Posterior cingulate gyrus (tissue), 11 donors: ENCODE measurements at regions of chr21 and their contacts with region 1.

Region 1: DNA sequence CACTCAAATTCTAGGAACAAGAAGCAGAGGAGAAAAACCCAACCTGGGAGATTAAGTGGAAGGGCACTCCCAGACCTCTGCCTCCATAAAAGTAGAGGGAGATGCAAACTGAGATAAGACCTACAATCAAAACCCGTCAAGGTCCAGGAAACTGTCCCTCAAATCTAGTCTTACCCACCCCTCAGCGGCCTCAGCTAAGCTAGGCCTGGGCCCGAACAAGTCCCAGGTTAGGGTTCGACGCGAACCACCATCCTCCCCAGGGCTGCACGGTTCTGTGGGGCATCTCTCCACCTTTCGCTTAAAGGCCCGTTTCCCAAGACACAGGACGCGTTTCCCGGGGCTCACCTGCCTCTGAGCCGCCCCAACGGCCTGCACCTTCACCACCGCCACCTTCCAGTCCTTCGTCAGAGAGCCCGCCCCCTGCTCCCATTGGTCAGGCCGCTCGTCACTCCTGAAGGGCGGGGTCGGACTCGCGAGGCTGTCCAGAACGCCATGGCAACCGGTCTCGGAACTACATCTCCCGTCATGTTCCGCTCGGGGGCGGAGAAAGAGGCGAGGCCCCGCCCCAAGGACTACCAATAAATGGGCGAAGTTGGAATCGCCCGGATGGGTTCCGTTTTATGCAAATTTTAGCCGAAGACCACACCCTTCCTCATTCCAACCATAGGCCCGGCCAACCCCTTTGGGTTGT is at the start of gene CRYZL1:
- DNase-seq: peak; percentile 100

Region 2: DNA sequence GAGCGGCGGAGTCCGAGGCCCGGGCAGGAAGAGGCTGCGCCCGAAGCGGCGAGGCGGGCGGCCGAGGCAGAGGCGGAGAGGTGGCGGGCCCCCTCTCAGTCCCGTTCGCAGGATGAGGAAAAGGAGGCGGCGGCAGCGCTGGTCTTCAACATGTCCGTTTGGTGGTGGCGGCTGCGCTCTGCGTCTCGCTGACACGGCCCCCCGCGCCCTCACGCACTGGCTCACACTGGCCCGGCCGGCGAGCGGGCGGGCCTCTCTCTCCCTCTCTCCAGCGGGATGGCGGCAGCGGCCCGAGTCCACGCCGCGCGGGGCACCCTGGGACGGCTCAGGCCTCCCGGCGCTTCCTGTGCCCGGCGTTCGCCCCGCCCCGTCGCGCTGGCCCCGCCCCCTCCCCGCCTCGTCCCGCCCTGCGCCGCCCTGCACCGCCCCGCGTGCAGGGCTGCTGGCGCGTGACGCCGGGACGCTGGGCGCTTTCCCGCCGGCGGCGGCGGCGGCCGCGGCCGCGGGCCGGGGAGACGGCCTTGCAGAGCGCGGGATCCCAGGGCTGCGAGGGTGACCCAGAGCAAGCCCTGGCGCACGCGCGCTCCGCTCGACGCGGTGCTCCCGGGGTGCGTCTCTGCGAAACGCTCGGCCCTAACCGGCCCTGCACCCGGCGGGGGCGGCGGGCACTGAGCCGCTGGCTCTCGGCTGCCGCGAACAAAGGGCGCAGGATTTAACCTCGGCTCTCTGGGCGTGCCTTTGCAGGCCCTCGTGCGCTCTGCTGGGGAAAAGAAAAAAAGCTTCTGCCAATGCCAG is 1909.5 kb before region 1 on chr21 and contains the start of gene SCAF4:
- intact Hi-C with region 1: loop called (anchors 10 kb)
- DNase-seq: peak; percentile 85 to 98 (median 90)

Region 3: GRCh38 chr21:33169359-33169758 is 472.1 kb before region 1 on chr21:
- intact Hi-C with region 1: no loop called
- DNase-seq: no peak

Region 4: GRCh38 chr21:33588485-33589335 is 52.8 kb before region 1 on chr21 and contains the start of gene DONSON:
- intact Hi-C with region 1: loop called (anchors 2 kb)
- DNase-seq: peak; percentile 78 to 98 (median 85)

Region 5: DNA sequence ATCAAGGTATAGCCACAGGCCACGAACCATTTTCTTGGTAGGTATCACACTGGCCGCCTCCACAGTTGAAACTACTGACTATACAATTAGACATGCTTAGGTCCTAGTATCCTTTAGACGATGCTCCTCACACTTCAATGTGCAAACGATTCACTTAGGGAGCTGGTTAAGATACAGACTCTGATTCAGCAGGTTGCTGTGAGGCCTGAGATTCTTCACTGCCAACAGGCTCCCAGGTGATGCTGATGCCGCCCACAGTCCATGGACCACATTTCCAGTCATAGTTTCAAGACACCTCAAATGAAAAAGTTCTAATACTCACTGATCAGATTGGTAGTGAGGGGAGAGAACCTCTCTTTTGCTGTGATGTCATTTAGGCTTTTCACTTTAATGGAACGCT is 267.3 kb after region 1 on chr21:
- intact Hi-C with region 1: loop called (anchors 5 kb)
- DNase-seq: no peak

Region 6: DNA sequence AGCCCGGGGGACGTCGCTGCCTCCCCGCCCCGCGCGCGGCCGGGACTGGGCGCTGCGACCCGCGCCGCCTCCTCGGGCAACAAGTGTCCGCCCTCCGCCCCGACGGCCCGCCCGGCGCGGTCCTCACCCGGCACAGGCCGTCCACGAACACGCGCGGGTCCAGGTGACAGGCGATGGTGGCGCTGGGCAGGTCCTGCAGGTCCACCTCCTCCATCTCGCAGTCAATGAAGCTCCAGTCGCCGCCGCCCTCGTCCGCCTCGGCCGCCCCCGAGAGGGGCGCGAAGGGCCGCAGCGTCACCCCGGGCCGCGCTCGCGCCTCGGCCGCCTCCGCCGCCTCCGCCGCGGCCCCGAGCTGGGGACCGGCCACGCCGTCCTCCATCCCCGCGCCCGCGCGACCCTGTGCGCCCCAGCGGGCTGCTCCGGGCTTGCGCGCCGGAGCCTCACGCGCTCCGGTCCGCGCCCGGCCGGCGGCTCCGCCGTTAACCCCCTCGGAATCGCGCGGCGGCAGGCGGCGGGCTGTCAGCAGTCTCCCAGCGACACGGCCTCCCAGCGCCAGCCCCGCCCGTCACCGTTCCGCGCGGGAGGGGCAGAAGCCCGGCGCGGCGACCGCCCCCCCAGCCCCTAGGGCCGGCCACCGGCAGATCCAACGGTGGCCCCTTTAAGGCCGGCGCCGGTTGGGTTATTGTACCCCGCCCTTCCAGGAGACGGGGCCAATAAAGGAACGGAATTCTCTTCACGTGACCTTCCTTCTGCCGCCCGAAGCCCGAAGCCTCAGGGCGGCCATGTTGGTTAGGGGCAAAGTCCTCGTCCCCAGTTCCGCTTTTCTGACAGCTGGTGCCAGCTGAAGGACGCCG is 973.4 kb after region 1 on chr21 and contains the start of gene RCAN1:
- intact Hi-C with region 1: loop called (anchors 10 kb)
- DNase-seq: peak; percentile 84 to 99 (median 92)